SK-N-SH (cell line): ENCODE measurements at regions of chrX and their contacts with region 1.

Region 1: GRCh38 chrX:119516157-119516702 is 48.0 kb downstream of the SLC25A5 start:
- DNase-seq: peak; percentile 75
- H3K4me3 ChIP-seq: no peak overlapping the region
- H3K27ac ChIP-seq: no peak overlapping the region
- H3K4me1 ChIP-seq: no peaks in the 10 kb centered on the region
- H3K27me3 ChIP-seq: peaks cover 11% of the 10 kb centered on the region; the same call in 1 of the 2 replicates
- CTCF ChIP-seq: peak; percentile 90
- EP300 ChIP-seq: no peak
- RAD21 ChIP-seq: peak; percentile 92

Region 2: GRCh38 chrX:119303137-119303536 is 213.1 kb before region 1 on chrX:
- CTCF ChIA-PET with region 1: no interaction called
- POLR2A ChIA-PET with region 1: no interaction called
- DNase-seq: no peak
- H3K4me3 ChIP-seq: no peak overlapping the region
- H3K27ac ChIP-seq: no peak overlapping the region
- H3K4me1 ChIP-seq: no peaks in the 10 kb centered on the region
- H3K27me3 ChIP-seq: peaks cover 9% of the 10 kb centered on the region; the same call in 1 of the 2 replicates
- CTCF ChIP-seq: no peak
- EP300 ChIP-seq: no peak
- RAD21 ChIP-seq: no peak

Region 3: DNA sequence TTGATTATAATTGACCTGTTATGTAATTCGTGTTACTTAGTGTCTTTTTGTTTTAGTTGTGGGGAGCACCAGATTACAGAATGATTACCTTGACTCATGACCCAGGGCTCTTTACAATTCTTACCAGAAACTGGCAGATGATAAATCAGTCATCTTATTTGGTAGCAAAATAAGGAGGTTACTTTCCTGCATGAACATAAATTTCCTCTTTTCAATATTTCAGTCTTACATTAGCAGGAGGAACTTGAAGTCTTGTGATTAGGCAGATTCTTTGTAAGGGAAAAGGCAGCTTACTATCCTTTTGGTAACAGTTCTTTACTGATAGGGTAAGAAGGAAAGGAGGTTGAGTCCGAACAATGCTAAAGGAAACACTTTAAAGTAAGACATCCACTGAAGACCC is 73.9 kb before region 1 on chrX:
- CTCF ChIA-PET with region 1: no interaction called
- POLR2A ChIA-PET with region 1: no interaction called
- DNase-seq: no peak
- H3K4me3 ChIP-seq: no peak overlapping the region
- H3K27ac ChIP-seq: no peak overlapping the region
- H3K4me1 ChIP-seq: no peaks in the 10 kb centered on the region
- H3K27me3 ChIP-seq: no peaks in the 10 kb centered on the region
- CTCF ChIP-seq: no peak
- EP300 ChIP-seq: no peak
- RAD21 ChIP-seq: no peak

Region 4: GRCh38 chrX:119482481-119483480 is 33.4 kb before region 1 on chrX:
- CTCF ChIA-PET with region 1: interaction called, 53 read pairs
- POLR2A ChIA-PET with region 1: interaction called, 4 read pairs
- DNase-seq: peak; percentile 55
- H3K4me3 ChIP-seq: peak overlapping the region; percentile 6 to 37; a peak in 1 of 4 replicates
- H3K27ac ChIP-seq: no peak overlapping the region
- H3K4me1 ChIP-seq: peaks cover 0 to 6% of the 10 kb centered on the region in 2 experiments; a peak in 1 of 4 replicates
- H3K27me3 ChIP-seq: peaks cover 26% of the 10 kb centered on the region; the same call in 1 of the 2 replicates
- CTCF ChIP-seq: peak; percentile 53
- EP300 ChIP-seq: no peak
- RAD21 ChIP-seq: no peak

Region 5: GRCh38 chrX:119495734-119496726 is 20.2 kb before region 1 on chrX:
- CTCF ChIA-PET with region 1: interaction called, 53 read pairs
- POLR2A ChIA-PET with region 1: no interaction called
- DNase-seq: no peak
- H3K4me3 ChIP-seq: no peak overlapping the region
- H3K27ac ChIP-seq: no peak overlapping the region
- H3K4me1 ChIP-seq: no peaks in the 10 kb centered on the region
- H3K27me3 ChIP-seq: peaks cover 9% of the 10 kb centered on the region; the same call in 1 of the 2 replicates
- CTCF ChIP-seq: no peak
- EP300 ChIP-seq: no peak
- RAD21 ChIP-seq: no peak

Region 6: DNA sequence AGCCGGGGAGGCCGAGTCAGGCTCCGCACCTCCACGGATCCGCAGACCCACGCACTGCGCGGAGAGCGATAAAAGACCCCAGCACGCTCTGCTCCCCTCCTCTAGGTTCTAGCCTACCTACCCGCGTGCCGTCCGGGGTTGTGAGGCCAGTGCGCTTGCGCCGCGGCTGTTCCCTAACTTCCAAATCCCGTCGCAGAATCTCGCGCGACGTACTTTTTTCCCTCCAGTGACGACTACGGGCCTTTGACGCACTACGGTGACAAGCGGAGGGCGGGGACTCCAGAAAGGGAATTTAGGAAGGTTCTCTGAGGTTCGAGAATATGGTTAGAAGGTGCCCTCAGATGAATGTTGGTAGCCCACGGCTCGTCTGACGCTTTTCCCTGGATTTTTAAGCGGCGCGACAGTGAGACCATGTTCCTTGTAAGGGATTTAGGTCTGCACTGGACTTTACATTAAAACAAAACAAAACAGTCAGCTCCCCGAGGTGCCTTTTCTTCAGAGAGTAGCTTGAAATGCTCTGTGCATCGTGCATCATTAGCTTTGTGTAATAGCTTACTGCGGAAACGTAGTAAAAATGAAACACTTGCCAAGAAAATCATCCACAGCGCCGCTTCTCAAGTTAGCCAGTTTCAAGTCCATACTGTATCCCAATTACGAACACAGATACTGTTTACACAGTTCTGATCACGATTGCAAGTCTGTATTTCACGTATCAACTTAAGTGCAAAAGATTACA is 90.2 kb after region 1 on chrX and contains the start of gene NKRF:
- CTCF ChIA-PET with region 1: interaction called, 10 read pairs
- POLR2A ChIA-PET with region 1: no interaction called
- DNase-seq: peak; percentile 85
- H3K4me3 ChIP-seq: peak within 1 kb of the TSS; percentile 65 to 70
- H3K27ac ChIP-seq: peak within 1 kb of the TSS; percentile 61 to 86; a peak in 3 of 4 replicates
- H3K4me1 ChIP-seq: no peaks in the 10 kb centered on the region; a peak in 1 of 4 replicates
- H3K27me3 ChIP-seq: peaks cover 10% of the 10 kb centered on the region; the same call in 1 of the 2 replicates
- CTCF ChIP-seq: no peak
- EP300 ChIP-seq: no peak
- RAD21 ChIP-seq: no peak
- polyA plus RNA-seq, gene NKRF: 3.2 and 3.7 TPM in 2 replicates

Region 7: GRCh38 chrX:119753571-119754257 is 237.5 kb after region 1 on chrX:
- CTCF ChIA-PET with region 1: interaction called, 15 read pairs
- POLR2A ChIA-PET with region 1: no interaction called
- DNase-seq: peak; percentile 57
- H3K4me3 ChIP-seq: no peak overlapping the region
- H3K27ac ChIP-seq: no peak overlapping the region
- H3K4me1 ChIP-seq: no peaks in the 10 kb centered on the region
- H3K27me3 ChIP-seq: peaks cover 21% of the 10 kb centered on the region
- CTCF ChIP-seq: peak; percentile 65
- EP300 ChIP-seq: no peak
- RAD21 ChIP-seq: peak; percentile 67